ENCODE measurements at regions of chr3 and their contacts with region 1.

Region 1: GRCh38 chr3:48439820-48440589 is at the starts of genes CCDC51 and TMA7:
- DNase-seq: peak; percentile 92 to 99 (median 97)
- ATAC-seq: peak; percentile 94 to 97 (median 95)
- H3K4me3 ChIP-seq: peak within 1 kb of the TSS; percentile 80 to 90
- H3K4me3 Mint-ChIP-seq: peak within 1 kb of the TSS; percentile 81 to 96 (median 89)
- H3K27ac ChIP-seq: peak within 1 kb of the TSS; percentile 93
- H3K27ac Mint-ChIP-seq: peak within 1 kb of the TSS; percentile 98 to 99
- H3K4me1 ChIP-seq: peaks cover 12 to 49% of the 10 kb centered on the region in 2 experiments
- H3K4me1 Mint-ChIP-seq: peaks cover 28 to 40% (median 37%) of the 10 kb centered on the region in 3 donors
- H3K27me3 ChIP-seq: no peaks in the 10 kb centered on the region
- H3K27me3 Mint-ChIP-seq: no peaks in the 10 kb centered on the region
- total RNA-seq, gene CCDC51: 5.0 to 7.9 (median 6.4) TPM
- total RNA-seq, gene TMA7: 216 to 245 (median 229) TPM

Region 2: GRCh38 chr3:48273594-48274211 is 166.3 kb before region 1 on chr3:
- CTCF ChIA-PET with region 1: interaction called, 6 to 38 read pairs
- POLR2A ChIA-PET with region 1: interaction called in 1 of 2 experiments, 3 read pairs
- DNase-seq: peak in 30 of 35 experiments; percentile 8 to 80 (median 40)
- ATAC-seq: peak in 1 of 4 experiments; percentile 28
- H3K4me3 ChIP-seq: no peak overlapping the region
- H3K4me3 Mint-ChIP-seq: no peak overlapping the region
- H3K27ac ChIP-seq: no peak overlapping the region
- H3K27ac Mint-ChIP-seq: no peak overlapping the region
- H3K4me1 ChIP-seq: peaks cover 10 to 13% of the 10 kb centered on the region in 2 experiments
- H3K4me1 Mint-ChIP-seq: peaks cover 18 to 25% (median 19%) of the 10 kb centered on the region in 3 donors
- H3K27me3 ChIP-seq: no peaks in the 10 kb centered on the region
- H3K27me3 Mint-ChIP-seq: no peaks in the 10 kb centered on the region

Region 3: DNA sequence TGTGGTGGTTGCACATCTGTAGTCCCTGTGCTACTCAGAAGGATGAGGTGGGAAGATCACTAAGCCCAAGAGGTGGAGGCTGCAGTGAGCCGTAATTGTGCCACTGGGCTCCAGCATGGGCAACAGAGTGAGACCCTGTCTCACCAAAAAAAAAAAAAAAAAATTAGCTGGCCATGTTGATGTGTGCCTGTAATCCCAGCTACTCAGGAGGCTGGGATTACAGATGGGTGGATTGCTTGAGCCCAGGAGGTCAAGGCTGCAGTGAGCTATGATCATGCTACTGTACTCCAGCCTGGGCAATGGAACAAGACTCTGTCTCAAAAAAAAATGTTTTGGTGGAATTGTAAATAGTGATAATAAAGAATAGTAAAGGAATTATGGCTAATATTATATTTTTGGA is 16.5 kb after region 1 on chr3:
- CTCF ChIA-PET with region 1: interaction called, 3 to 16 read pairs
- POLR2A ChIA-PET with region 1: interaction called in 1 of 2 experiments, 3 read pairs
- DNase-seq: no peak
- ATAC-seq: no peak
- H3K4me3 ChIP-seq: no peak overlapping the region
- H3K4me3 Mint-ChIP-seq: no peak overlapping the region
- H3K27ac ChIP-seq: no peak overlapping the region
- H3K27ac Mint-ChIP-seq: no peak overlapping the region
- H3K4me1 ChIP-seq: no peaks in the 10 kb centered on the region
- H3K4me1 Mint-ChIP-seq: peaks cover 4 to 7% (median 7%) of the 10 kb centered on the region in 3 donors
- H3K27me3 ChIP-seq: no peaks in the 10 kb centered on the region
- H3K27me3 Mint-ChIP-seq: no peaks in the 10 kb centered on the region

Region 4: GRCh38 chr3:48478596-48479555 is 38.9 kb after region 1 on chr3:
- CTCF ChIA-PET with region 1: interaction called in 1 of 2 experiments, 32 read pairs
- POLR2A ChIA-PET with region 1: interaction called in 1 of 2 experiments, 4 read pairs
- DNase-seq: peak; percentile 38 to 77 (median 65)
- ATAC-seq: peak; percentile 87 to 89 (median 88)
- H3K4me3 ChIP-seq: peak overlapping the region in 1 of 2 donors; percentile 53
- H3K4me3 Mint-ChIP-seq: peak overlapping the region; percentile 77 to 83 (median 82)
- H3K27ac ChIP-seq: peak overlapping the region; percentile 89
- H3K27ac Mint-ChIP-seq: peak overlapping the region; percentile 98
- H3K4me1 ChIP-seq: peaks cover 6 to 61% of the 10 kb centered on the region in 2 experiments
- H3K4me1 Mint-ChIP-seq: peaks cover 49 to 57% (median 50%) of the 10 kb centered on the region in 3 donors
- H3K27me3 ChIP-seq: no peaks in the 10 kb centered on the region
- H3K27me3 Mint-ChIP-seq: no peaks in the 10 kb centered on the region

Region 5: DNA sequence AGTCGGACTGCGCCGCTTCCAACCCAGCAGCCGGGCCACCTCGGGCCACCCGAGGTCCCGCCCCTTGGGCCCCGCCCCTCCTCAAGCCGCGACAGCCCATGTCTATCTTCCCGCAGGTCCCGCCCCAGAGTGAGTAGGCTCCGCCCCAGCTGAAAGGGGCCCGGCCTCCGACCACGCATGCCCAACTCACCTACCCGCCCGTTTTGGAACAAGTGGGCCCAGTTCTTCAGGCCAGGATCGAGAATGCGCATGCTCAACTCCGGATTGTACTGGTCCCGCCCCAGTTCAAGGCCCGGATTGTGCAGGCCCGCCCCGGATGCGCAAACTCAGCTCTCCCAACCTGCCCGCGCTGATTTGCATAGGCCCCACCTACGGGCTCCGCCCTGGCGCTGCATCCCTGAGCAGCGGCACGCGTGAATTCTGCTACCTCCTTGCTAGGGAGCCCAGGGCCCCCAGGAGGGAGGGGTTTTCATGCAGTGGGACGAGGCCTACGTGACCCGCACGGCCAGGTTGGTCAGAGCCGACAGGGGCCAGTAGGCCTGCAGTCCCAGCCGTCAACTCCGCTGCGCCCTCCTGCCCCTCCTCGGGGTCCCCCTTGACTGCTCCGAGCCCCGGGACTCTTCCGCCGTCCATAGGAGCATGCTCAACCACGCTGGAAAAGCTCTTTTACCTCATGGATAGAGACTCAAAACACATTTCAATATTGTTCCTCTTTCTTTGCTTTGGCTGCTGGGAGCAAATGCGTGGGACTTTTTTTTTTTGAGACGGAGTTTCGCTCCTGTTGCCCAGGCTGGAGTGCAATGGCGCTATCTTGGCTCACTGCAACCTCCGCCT is 117.0 kb after region 1 on chr3 and contains the start of gene PFKFB4:
- CTCF ChIA-PET with region 1: interaction called, 3 to 13 read pairs
- POLR2A ChIA-PET with region 1: interaction called, 4 to 6 read pairs
- DNase-seq: peak; percentile 98 to 100 (median 99)
- ATAC-seq: peak; percentile 90 to 91 (median 90)
- H3K4me3 ChIP-seq: peak within 1 kb of the TSS; percentile 65 to 79
- H3K4me3 Mint-ChIP-seq: peak within 1 kb of the TSS; percentile 76 to 85 (median 82)
- H3K27ac ChIP-seq: no peak within 1 kb of the TSS
- H3K27ac Mint-ChIP-seq: peak within 1 kb of the TSS; percentile 79 to 86
- H3K4me1 ChIP-seq: peaks cover 0 to 31% of the 10 kb centered on the region in 2 experiments
- H3K4me1 Mint-ChIP-seq: peaks cover 18 to 24% (median 21%) of the 10 kb centered on the region in 3 donors
- H3K27me3 ChIP-seq: peaks cover 0 to 9% of the 10 kb centered on the region in 2 experiments
- H3K27me3 Mint-ChIP-seq: no peaks in the 10 kb centered on the region
- total RNA-seq, gene PFKFB4: 1.8 to 4.2 (median 2.4) TPM